Activated CD8-positive, alpha-beta T cell treated with anti-CD3 and anti-CD28 coated beads for 36 hours (primary cell): ENCODE measurements at regions of chr20 and their contacts with region 1.

Region 1: GRCh38 chr20:33731693-33732165 is at the start of gene ZNF341:
- DNase-seq: peak; percentile 90
- ATAC-seq: peak; percentile 89
- H3K4me3 Mint-ChIP-seq: peak within 1 kb of the TSS; percentile 79
- H3K27ac Mint-ChIP-seq: peak within 1 kb of the TSS; percentile 84
- H3K4me1 Mint-ChIP-seq: peaks cover 21% of the 10 kb centered on the region
- H3K27me3 Mint-ChIP-seq: no peaks in the 10 kb centered on the region
- CTCF ChIP-seq: peak; percentile 78
- total RNA-seq, gene ZNF341: 4.3 to 5.0 TPM

Region 2: DNA sequence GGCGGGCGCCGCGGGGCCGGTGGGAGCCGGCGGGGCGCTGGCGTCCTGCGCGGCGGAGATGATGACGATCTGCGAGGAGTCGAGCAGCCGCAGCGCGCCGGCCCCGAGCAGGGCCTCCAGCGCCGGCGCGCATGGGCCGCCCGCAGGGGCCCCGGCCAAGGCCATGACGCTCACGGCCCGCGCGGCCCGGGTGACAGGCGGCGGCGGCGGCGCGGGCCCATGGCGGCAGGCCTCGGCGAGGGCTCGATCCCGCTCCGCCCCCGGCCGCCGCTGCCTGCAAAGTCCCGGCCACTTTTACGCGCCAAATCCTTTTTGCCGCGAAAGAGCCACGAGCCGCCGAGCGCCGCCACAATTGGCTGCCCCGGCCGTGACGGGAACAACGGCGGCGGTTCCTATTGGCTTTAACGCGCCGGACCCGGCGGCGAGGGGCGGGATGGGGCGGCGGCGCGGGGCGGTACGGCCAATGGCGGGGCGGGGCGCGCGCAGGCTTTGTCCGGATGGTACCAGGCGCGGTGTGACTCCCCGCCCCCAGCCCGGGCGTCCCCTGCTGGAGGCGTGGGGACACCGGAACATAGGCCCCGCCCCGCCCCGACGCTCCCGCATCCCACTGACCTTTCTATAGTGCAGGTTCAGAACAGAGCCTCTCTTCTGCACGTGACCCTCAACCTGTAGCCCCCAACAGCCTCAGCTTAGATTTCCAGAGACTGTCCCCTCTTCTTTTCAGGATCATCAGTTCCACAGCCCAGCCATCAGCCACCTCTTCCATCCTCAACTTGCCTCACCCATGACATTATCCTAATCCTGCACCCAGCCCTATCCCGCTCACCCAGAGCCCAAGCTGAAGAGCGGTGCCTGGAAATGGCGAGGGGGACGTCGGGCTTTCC is 45.4 kb before region 1 on chr20 and contains the start of gene E2F1:
- CTCF ChIA-PET with region 1: interaction called, 8 read pairs
- POLR2A ChIA-PET with region 1: interaction called, 27 read pairs
- intact Hi-C with region 1: loop called (anchors 5 kb)
- DNase-seq: peak; percentile 97
- ATAC-seq: peak; percentile 85
- H3K4me3 Mint-ChIP-seq: peak within 1 kb of the TSS; percentile 95
- H3K27ac Mint-ChIP-seq: peak within 1 kb of the TSS; percentile 92
- H3K4me1 Mint-ChIP-seq: peaks cover 73% of the 10 kb centered on the region
- H3K27me3 Mint-ChIP-seq: no peaks in the 10 kb centered on the region
- CTCF ChIP-seq: no peak
- total RNA-seq, gene E2F1: 71.2 to 72.0 TPM

Region 3: GRCh38 chr20:33719989-33720709 is 11.6 kb before region 1 on chr20 and contains the start of gene PXMP4:
- CTCF ChIA-PET with region 1: interaction called, 8 read pairs
- POLR2A ChIA-PET with region 1: interaction called, 11 read pairs
- intact Hi-C with region 1: no loop called
- DNase-seq: peak; percentile 93
- ATAC-seq: peak; percentile 98
- H3K4me3 Mint-ChIP-seq: peak within 1 kb of the TSS; percentile 91
- H3K27ac Mint-ChIP-seq: peak within 1 kb of the TSS; percentile 89
- H3K4me1 Mint-ChIP-seq: peaks cover 14% of the 10 kb centered on the region
- H3K27me3 Mint-ChIP-seq: no peaks in the 10 kb centered on the region
- CTCF ChIP-seq: no peak
- total RNA-seq, gene PXMP4: 6.9 to 7.3 TPM

Region 4: DNA sequence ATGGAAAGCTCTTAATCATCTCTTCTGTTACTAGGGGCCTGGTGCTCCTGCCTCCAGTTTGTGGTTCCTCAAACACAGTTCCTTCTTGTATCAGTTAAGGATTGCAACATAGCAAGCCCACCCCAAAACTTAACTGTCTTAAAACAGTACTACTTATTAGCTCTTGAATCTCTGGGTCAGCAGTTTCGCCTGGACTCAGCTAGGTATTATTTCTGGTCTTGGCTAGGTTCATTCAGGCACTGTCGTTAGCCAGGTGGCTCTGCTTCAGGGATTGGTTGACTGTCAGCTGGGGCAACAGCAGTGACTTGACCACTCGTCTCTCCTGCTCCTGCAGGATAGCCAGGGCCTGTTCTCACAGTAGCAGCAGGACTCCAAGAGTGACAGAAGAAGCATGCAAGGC is 232.0 kb after region 1 on chr20:
- CTCF ChIA-PET with region 1: no interaction called
- POLR2A ChIA-PET with region 1: no interaction called
- intact Hi-C with region 1: no loop called
- DNase-seq: no peak
- ATAC-seq: no peak
- H3K4me3 Mint-ChIP-seq: no peak overlapping the region
- H3K27ac Mint-ChIP-seq: no peak overlapping the region
- H3K4me1 Mint-ChIP-seq: no peaks in the 10 kb centered on the region
- H3K27me3 Mint-ChIP-seq: no peaks in the 10 kb centered on the region
- CTCF ChIP-seq: no peak